BJ (cell line): ENCODE measurements at regions of chr16 and their contacts with region 1.

Region 1: DNA sequence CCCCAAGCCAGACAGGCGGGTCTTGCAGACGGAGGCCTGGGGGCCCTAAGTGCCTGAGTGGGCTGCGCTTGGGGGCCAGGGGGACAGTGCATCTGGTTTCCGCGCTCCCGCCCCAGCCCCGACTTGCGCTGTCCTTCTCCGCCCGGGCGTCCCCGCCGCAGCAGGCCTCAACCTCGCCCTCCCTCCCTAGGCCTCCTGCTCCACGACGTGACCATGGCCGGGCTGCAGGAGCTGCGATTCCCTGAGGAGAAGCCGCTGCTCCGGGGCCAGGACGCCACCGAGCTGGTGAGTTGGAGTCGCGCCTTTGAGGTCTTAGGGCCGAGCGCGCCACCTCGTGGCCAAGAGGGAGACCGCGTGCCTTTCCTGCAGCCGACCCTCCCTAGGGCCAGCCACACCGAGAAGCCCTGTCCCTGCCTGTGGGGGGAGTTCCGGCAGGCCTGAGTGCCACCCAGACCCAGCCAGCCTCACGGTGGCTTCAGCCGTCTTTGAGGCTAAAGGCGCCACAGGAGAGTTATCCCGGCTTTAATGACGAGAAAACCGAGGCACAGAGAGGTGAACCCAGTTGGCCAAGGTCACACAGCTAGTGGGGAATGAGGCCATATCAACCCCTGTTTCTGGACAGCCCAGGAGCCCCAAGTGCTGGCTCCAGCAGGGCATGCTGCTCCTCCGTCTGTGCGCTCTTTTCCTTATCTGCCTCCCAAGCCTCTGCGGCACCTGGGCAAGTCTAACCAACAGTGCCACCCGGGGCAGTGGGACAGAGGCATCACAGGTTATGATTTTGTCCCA is 12.2 kb upstream of the NDRG4 start:
- DNase-seq: no peak
- H3K4me3 ChIP-seq: no peak overlapping the region
- H3K27me3 ChIP-seq: peaks cover 2% of the 10 kb centered on the region; the same call in 1 of the 2 replicates
- CTCF ChIP-seq: peak; percentile 97

Region 2: DNA sequence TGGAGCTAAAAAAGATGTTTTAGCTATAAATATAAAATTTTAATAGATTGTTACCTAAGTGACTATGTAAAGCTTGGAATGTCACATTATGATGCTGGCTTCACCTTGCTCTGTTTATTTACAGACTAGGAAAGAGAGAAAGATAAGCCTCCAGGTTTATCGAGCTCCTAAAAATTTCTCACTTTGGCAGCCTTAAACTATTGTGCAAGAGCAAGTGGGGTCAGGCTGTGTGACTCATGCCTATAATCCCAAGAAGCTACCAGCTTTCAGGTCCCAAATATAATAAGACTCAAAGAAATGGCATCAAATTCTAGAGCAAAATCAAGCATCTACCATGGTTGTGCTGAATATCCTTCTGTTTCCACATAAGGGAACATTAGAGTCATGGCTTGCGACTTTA is 158.6 kb before region 1 on chr16:
- CTCF ChIA-PET with region 1: interaction called, 190 read pairs
- POLR2A ChIA-PET with region 1: no interaction called
- DNase-seq: no peak
- H3K4me3 ChIP-seq: no peak overlapping the region
- H3K27me3 ChIP-seq: peaks cover 5% of the 10 kb centered on the region
- CTCF ChIP-seq: no peak

Region 3: DNA sequence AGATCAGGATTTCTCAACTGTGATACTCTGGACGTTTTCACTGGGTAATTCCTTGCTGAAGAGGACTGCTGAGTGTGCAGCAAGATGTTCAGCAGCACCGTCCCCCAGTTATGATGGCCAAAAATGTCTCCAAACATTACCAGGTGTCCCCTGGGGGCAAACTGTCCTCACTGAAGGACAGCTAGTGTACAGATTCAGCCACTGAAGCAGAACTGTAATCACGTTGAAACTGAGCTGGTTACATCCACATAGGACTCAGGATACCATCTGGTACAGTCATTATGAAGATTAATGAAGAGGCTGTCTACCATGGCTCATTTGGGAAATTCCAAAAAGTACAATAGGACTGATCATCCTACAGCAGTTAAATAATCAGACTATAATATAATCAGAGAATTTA is 138.8 kb before region 1 on chr16:
- CTCF ChIA-PET with region 1: interaction called, 18 read pairs
- POLR2A ChIA-PET with region 1: no interaction called
- DNase-seq: no peak
- H3K4me3 ChIP-seq: no peak overlapping the region
- H3K27me3 ChIP-seq: peaks cover 7% of the 10 kb centered on the region
- CTCF ChIP-seq: no peak